ENCODE measurements at regions of chr16 and their contacts with region 1.

Region 1: GRCh38 chr16:14486520-14487303 is 143.3 kb downstream of the PARN start:
- DNase-seq: peak; percentile 37 to 89 (median 76)
- H3K4me3 ChIP-seq: peak overlapping the region in 58 of 59 donors; percentile 1 to 62 (median 46)
- H3K27ac ChIP-seq: peak overlapping the region in 58 of 59 donors; percentile 0 to 84 (median 70)
- H3K27me3 ChIP-seq: no peaks in the 10 kb centered on the region
- CTCF ChIP-seq: peak in 11 of 56 donors; percentile 7 to 44 (median 19)

Region 2: GRCh38 chr16:14436401-14436955 is 50.2 kb before region 1 on chr16:
- intact Hi-C with region 1: loop called in 1 of 2 experiments (anchors 10 kb)
- DNase-seq: peak in 3 of 10 donors; percentile 46 to 53 (median 52)
- H3K4me3 ChIP-seq: peak overlapping the region in 11 of 59 donors; percentile 2 to 40 (median 24)
- H3K27ac ChIP-seq: peak overlapping the region in 1 of 59 donors; percentile 23
- H3K27me3 ChIP-seq: no peaks in the 10 kb centered on the region
- CTCF ChIP-seq: no peak

Region 3: GRCh38 chr16:14501331-14502255 is 14.9 kb after region 1 on chr16:
- intact Hi-C with region 1: loop called in 1 of 2 experiments (anchors 1 kb)
- DNase-seq: peak; percentile 63 to 90 (median 84)
- H3K4me3 ChIP-seq: peak overlapping the region in 2 of 59 donors; percentile 8 to 20
- H3K27ac ChIP-seq: peak overlapping the region in 57 of 59 donors; percentile 1 to 82 (median 69)
- H3K27me3 ChIP-seq: no peaks in the 10 kb centered on the region
- CTCF ChIP-seq: peak in 5 of 56 donors; percentile 3 to 25 (median 13)

Measured in dorsolateral prefrontal cortex (tissue), 120 donors.